ENCODE measurements at regions of chr7 and their contacts with region 1.

Region 1: DNA sequence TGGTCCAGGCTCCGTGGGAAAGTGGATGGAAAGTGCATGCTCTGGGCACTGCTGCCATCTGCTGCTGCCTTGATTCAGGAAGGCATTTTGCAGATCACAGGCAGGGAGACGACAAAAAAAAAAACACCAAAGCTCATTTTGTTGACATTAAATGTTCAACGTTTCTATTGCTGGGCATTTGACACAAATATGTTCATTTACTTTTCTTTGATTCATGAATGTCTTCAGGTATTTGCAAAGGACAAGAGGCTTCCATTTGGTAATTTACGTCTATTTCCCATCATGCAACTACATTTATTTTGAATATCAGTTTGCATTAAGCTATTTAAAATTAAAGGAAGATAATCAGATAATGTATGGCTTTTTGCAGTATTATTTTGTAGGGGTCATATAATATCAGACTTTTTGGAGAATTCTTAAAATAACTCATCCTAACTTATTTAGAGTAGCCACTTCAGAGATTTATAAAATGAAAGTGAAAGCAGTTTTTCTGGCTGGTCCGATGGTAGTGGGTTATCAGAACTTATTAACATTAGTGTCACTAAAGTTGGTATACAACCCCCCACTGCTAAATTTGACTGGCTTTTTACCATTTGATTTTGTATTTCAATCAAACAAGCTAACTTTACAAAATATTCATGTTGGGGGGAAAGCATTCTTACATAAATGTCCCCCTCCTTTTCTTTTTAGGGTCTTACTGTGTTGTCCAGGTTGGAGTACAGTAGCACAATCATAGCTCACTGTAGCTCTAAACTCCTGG is 65.3 kb downstream of the PDIA4 start:
- DNase-seq: no peak

Region 2: DNA sequence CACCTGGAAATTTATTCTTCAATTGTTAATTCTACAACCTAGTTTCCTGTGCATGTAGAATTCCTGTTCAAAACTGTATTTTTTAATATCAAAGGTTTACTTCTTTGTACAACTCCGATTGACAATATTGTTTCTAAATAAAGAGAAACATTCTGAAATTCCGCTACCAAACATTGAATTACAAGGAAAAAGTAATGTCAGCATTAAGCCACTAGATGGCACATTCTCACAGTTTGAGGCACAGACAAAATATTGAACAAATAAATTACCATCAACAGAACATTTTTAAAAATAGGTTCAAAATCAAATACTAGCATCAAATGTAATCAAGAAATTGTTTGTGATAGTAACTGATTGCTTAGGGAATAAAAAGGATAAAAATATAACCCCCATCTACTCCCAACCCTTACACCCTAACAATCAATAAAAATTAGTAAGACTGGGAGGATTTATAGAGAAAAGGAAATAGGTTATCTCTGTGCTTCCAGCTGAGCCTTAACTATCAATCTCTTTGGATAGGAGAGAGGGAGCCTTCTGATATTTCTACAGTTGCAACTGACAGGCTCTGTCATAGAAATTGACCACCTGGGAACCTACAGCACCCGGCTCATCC is 459.0 kb before region 1 on chr7:
- intact Hi-C with region 1: loop called (anchors 5 kb)
- DNase-seq: no peak

Region 3: DNA sequence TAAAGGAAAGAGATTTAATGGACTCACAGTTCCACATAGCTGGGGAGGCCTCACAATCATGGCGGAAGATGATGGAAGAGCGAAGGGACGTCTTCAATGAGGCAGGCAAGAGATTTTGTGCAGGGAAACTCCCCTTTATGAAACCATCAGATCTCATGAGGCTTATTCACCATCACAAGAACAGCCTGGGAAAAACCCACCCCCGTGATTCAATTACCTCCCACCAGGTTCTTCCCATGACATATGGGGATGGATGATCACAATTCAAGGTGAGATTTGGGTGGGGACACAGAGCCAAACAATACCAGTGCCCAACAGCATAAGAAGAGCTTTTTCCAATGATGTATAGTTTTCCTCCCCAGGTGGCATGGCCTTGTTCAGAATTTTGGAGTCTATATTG is 383.6 kb before region 1 on chr7:
- intact Hi-C with region 1: loop called (anchors 2 kb)
- DNase-seq: no peak

Region 4: DNA sequence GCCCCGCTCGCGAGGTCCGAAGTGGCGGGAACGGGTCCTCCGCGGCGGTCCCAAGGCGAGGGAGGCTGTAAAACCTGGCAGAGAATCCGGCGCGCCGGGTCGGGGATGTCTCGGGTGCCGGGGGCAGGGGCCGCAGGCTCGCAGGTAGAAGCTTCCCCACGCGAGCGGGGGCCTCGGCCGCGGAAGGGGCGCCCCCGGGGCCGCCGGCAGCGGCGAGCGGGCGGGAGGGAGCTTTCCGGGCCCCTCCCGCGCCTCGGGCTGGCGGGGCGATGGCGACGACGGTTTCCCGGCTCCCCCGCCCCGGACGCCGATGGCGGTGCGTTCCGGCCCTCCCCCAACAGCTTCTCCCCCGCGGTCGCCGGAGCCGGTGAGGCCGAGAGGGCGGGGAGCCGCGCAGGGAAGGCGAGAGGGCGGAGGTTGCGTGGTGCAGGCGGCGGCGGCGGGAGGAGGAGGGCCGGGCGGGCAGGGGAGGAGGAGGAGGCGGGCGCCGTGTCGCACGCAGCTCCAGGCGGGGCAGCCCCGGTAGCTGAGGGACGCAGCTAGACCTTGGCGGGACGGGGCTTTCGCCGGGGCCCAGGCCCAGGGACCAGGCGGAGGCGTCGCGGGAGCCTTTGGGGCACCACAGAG is 264.5 kb before region 1 on chr7 and contains the start of gene CUL1:
- intact Hi-C with region 1: loop called (anchors 10 kb)
- DNase-seq: peak; percentile 93
- total RNA-seq, gene CUL1: 42.3 TPM

Region 5: GRCh38 chr7:148856891-148857290 is 106.1 kb before region 1 on chr7:
- intact Hi-C with region 1: loop called (anchors 5 kb)
- DNase-seq: no peak

Region 6: DNA sequence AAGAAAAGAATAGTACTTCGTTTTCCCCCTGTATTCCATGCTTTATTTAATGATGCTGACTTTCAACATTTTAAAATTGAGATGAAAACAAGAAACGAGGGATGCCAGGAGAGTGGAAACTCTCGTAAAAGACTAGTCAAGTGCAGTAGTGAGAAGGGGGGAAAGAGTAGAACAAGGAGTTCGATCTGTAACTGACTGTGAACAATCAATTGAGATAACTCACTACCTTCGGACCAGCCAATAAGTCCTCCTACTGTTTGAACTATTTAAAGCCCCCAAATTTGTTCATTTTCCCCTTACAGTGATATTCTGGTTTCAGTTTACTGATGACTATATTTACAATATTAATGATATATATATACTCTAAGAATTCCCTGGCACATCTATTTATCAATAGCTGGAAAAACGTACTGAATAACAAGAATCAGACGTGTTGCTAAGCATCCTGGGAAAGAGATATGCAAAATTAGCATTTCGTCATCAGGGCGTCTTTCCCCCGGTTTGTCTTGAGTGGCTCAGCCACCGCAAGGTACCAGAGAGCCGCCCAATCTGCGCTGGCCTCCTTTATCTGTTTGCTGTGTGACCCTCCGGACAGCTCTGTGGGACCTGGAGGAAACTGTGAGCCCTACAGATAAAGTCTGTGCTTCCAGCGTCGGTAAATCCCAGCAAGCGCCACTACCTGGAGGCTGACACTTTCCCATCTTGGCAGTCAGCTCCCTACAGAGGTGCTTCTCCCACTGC is 24.2 kb after region 1 on chr7:
- intact Hi-C with region 1: loop called (anchors 2 kb)
- DNase-seq: peak; percentile 88

Measured in cardiac septum (tissue), 1 donor.